Prostate gland (tissue), 2 donors: ENCODE measurements at regions of chrX and their contacts with region 1.

Region 1: GRCh38 chrX:103697687-103698086 is 11.2 kb upstream of the MORF4L2 start:
- DNase-seq: no peak
- H3K4me3 ChIP-seq: no peak overlapping the region
- H3K27ac ChIP-seq: no peak overlapping the region
- H3K4me1 ChIP-seq: no peaks in the 10 kb centered on the region
- H3K27me3 ChIP-seq: no peaks in the 10 kb centered on the region
- CTCF ChIP-seq: no peak
- POLR2A ChIP-seq: no peak

Region 2: GRCh38 chrX:103774070-103774642 is 76.5 kb after region 1 on chrX:
- intact Hi-C with region 1: loop called (anchors 10 kb)
- DNase-seq: peak; percentile 12
- H3K4me3 ChIP-seq: no peak overlapping the region
- H3K27ac ChIP-seq: no peak overlapping the region
- H3K4me1 ChIP-seq: no peaks in the 10 kb centered on the region
- H3K27me3 ChIP-seq: no peaks in the 10 kb centered on the region
- CTCF ChIP-seq: peak in 3 of 4 experiments; percentile 10 to 57 (median 53)
- POLR2A ChIP-seq: no peak

Region 3: DNA sequence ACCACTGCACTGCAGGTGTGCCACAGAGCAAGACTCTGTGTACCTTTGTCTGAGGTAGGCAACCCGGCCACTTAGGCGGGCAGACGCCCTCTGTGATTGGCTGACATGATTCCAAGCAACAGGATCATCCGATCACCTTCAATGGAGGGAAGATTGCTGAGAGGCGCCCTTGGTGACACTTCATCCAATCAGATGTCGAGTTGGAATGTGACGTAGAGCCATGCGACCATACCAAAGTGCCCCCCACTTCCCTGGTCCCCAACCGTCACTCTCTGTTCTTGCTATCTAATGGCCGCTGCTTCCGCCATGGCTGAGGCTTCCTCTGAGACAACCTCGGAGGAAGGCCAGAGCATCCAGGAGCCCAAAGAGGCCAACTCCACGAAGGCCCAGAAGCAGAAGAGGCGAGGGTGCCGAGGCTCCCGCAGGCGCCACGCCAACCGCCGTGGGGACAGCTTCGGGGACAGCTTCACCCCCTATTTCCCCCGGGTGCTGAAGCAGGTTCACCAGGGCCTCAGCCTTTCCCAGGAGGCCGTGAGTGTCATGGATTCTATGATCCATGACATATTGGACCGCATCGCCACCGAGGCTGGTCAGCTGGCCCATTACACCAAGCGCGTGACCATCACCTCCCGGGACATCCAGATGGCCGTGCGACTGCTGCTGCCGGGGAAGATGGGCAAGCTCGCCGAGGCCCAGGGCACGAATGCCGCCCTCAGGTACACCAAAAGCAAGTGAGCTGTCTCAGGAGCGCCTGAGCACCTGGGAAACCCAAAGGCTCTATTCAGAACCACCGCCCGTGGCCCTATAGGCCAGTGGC is 342.2 kb after region 1 on chrX and contains the start of gene H2BW2:
- intact Hi-C with region 1: no loop called
- DNase-seq: no peak
- H3K4me3 ChIP-seq: no peak within 1 kb of the TSS
- H3K27ac ChIP-seq: no peak within 1 kb of the TSS
- H3K4me1 ChIP-seq: no peaks in the 10 kb centered on the region
- H3K27me3 ChIP-seq: no peaks in the 10 kb centered on the region
- CTCF ChIP-seq: no peak
- POLR2A ChIP-seq: no peak
- total RNA-seq, gene H2BW2: 4.2 TPM in 1 of 2 donors, not detected in the other

Region 4: GRCh38 chrX:104136241-104137019 is 438.7 kb after region 1 on chrX:
- intact Hi-C with region 1: loop called (anchors 10 kb)
- DNase-seq: peak; percentile 70
- H3K4me3 ChIP-seq: peak overlapping the region in 1 of 2 donors; percentile 22
- H3K27ac ChIP-seq: no peak overlapping the region
- H3K4me1 ChIP-seq: no peaks in the 10 kb centered on the region
- H3K27me3 ChIP-seq: no peaks in the 10 kb centered on the region
- CTCF ChIP-seq: peak; percentile 28 to 64 (median 58)
- POLR2A ChIP-seq: no peak